AG04449 (cell line): ENCODE measurements at regions of chr6 and their contacts with region 1.

Region 1: GRCh38 chr6:138109042-138109997 is 2.1 kb upstream of the PERP start:
- DNase-seq: no peak
- H3K4me3 ChIP-seq: no peak overlapping the region
- CTCF ChIP-seq: peak; percentile 78

Region 2: DNA sequence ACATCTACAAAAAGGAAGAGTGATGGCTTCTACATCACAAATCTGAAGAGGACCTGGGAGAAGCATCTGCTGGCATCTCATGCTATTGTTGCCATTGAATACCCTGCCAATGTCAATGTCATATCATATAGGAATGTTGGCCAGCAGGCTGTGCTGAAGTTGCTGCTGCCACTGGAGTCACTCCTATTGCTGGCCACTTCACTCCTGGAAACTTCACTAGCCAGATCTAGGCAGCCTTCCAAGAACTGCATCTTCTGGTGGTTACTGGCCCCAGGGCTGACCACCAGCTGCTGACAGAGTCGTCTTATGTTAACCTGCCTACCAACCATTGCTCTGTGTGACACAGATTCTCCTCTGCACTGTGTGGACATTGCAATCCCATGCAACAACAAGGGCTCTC is 113.9 kb before region 1 on chr6:
- CTCF ChIA-PET with region 1: interaction called, 203 read pairs
- POLR2A ChIA-PET with region 1: no interaction called
- DNase-seq: no peak
- H3K4me3 ChIP-seq: no peak overlapping the region
- CTCF ChIP-seq: no peak

Region 3: GRCh38 chr6:138098306-138098705 is 11.0 kb before region 1 on chr6:
- CTCF ChIA-PET with region 1: interaction called, 10 read pairs
- POLR2A ChIA-PET with region 1: no interaction called
- DNase-seq: no peak
- H3K4me3 ChIP-seq: no peak overlapping the region
- CTCF ChIP-seq: no peak